Dendritic cell treated with granulocyte-macrophage colony-stimulating factor and Interleukin-4, amounts not matched to agents 40 ng/mL and 50 ng/mL, for 4 days (primary cell): ENCODE measurements at regions of chr14 and their contacts with region 1.

Region 1: GRCh38 chr14:23539248-23540140 is 12.1 kb downstream of the ZFHX2 start:
- H3K4me3 Mint-ChIP-seq: no peak overlapping the region
- H3K27ac Mint-ChIP-seq: no peak overlapping the region
- H3K4me1 Mint-ChIP-seq: peaks cover 19% of the 10 kb centered on the region
- H3K27me3 Mint-ChIP-seq: peaks cover 2% of the 10 kb centered on the region

Region 2: DNA sequence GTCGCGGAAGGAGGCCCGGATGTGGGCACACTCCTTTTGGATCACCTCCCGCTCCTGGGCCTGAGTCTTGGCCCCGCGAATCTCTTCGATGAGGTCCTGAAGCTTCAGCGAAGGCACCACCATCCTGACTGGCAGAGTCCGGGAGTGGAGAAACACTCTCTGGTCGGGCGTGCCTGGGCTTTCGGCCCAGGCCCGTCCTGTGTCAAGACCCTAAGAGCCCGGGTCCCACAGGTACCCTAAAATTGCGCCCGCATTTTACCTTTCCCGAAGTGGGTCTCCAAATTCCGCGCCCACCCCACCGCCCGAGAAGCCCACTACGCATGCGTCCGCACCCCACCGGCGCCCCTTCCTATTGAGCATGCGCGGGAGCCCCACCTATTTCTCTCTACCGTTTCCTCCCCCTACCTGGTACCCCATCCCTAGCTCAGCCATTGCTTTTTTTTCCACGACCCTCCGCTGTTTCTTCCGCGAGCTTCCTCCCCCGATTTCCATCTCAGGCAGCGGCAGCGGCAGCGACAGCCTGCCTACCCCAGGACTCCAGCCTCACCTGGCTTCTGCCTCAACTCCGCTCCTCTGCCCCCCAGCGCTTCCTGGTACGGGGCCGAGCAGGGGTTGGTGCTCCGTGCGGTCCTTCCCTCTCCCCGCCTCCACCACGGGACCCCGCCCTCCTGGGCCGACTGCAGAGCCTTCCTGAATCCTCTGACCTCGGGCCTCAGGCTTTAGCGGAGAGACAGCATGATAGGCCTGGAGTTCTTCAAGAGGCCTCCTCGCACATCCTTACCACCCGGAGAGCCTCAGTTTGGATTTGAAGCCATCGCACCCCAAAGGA is 27.9 kb after region 1 on chr14 and contains the start of gene AP1G2:
- intact Hi-C with region 1: loop called (anchors 1 kb)
- H3K4me3 Mint-ChIP-seq: peak within 1 kb of the TSS; percentile 97
- H3K27ac Mint-ChIP-seq: peak within 1 kb of the TSS; percentile 92
- H3K4me1 Mint-ChIP-seq: peaks cover 89% of the 10 kb centered on the region
- H3K27me3 Mint-ChIP-seq: no peaks in the 10 kb centered on the region